CD4-positive, alpha-beta T cell (primary cell): ENCODE measurements at regions of chr3 and their contacts with region 1.

Region 1: DNA sequence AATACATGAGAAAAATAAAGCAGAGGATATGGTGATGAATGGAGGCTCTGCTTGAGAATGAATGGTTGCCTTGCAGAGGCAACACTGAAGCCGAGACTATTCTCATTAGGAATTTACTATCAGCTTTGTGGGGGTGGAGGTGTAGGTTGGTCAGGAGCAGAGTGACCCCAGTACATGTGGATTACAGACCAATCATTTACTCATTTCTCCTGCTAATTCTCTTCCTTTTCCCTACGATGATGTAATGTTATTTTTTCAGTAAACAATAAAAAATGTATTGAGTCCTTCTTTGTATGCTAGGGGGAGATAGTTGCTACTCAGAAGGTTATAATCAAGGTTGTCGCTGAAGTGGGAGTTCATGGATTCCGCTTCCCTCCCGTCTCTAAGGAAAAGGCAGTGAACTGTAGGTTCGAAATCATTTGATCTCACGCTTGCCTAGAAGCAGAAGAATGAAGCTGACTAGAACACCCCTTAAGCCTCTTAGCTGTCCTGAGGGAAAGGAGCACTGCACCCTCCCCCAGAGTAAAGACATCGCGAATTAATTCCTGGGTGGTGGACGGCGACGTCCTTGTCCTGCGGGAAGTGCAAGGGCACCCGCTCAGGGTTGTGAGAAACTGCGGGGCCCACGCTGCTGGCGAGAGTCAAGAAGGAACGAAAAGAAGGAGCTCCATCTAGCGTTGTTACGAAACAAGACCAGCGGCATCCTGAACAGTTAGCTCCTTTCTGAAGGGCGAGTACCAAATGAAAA is 213.2 kb upstream of the PFN2 start:
- DNase-seq: peak; percentile 6 to 71 (median 24)
- ATAC-seq: peak; percentile 75
- H3K4me3 ChIP-seq: peak overlapping the region; percentile 13
- H3K4me3 Mint-ChIP-seq: no peak overlapping the region
- H3K27ac ChIP-seq: no peak overlapping the region
- H3K27ac Mint-ChIP-seq: no peak overlapping the region
- H3K4me1 ChIP-seq: peaks cover 8% of the 10 kb centered on the region
- H3K4me1 Mint-ChIP-seq: no peaks in the 10 kb centered on the region
- H3K27me3 ChIP-seq: peaks cover 0 to 11% of the 10 kb centered on the region in 2 experiments
- H3K27me3 Mint-ChIP-seq: peaks cover 27% of the 10 kb centered on the region
- CTCF ChIP-seq: peak; percentile 47

Region 2: GRCh38 chr3:149044339-149045083 is 1139.3 kb before region 1 on chr3:
- CTCF ChIA-PET with region 1: no interaction called
- POLR2A ChIA-PET with region 1: no interaction called
- intact Hi-C with region 1: no loop called
- DNase-seq: no peak
- ATAC-seq: no peak
- H3K4me3 ChIP-seq: no peak overlapping the region
- H3K4me3 Mint-ChIP-seq: no peak overlapping the region
- H3K27ac ChIP-seq: no peak overlapping the region
- H3K27ac Mint-ChIP-seq: no peak overlapping the region
- H3K4me1 ChIP-seq: no peaks in the 10 kb centered on the region
- H3K4me1 Mint-ChIP-seq: peaks cover 18% of the 10 kb centered on the region
- H3K27me3 ChIP-seq: no peaks in the 10 kb centered on the region
- H3K27me3 Mint-ChIP-seq: no peaks in the 10 kb centered on the region
- CTCF ChIP-seq: no peak

Region 3: DNA sequence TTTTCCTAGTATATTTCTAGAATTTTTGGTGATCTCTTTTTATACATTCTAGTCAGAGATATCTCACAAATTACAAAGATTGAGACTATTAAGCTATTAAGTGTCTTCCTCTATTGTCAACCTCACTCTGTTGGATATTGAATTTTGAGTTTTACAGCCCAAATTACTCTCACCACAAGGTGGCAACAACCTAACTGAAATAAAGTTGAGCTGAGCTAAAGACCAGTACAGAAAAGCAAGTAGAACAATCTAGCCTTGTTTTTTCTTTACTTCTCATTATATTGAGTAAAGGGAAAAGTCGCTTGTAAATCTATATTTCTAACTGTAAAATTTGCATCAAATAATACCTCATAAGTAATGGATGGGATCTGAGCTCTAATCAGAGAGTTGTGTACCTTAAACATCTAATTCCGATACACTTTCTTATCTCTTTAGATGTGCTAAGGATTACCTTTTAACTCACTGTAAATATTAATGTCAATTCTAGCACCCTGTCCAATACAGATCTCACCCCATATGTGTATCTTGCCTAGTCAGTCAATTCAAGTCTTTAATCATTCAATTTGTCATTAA is 418.0 kb before region 1 on chr3:
- CTCF ChIA-PET with region 1: no interaction called
- POLR2A ChIA-PET with region 1: no interaction called
- intact Hi-C with region 1: loop called in 1 of 2 experiments (anchors 5 kb)
- DNase-seq: peak in 1 of 14 experiments; percentile 18
- ATAC-seq: no peak
- H3K4me3 ChIP-seq: no peak overlapping the region
- H3K4me3 Mint-ChIP-seq: no peak overlapping the region
- H3K27ac ChIP-seq: no peak overlapping the region
- H3K27ac Mint-ChIP-seq: no peak overlapping the region
- H3K4me1 ChIP-seq: no peaks in the 10 kb centered on the region
- H3K4me1 Mint-ChIP-seq: no peaks in the 10 kb centered on the region
- H3K27me3 ChIP-seq: peaks cover 6 to 34% of the 10 kb centered on the region in 2 experiments
- H3K27me3 Mint-ChIP-seq: peaks cover 19% of the 10 kb centered on the region
- CTCF ChIP-seq: peak; percentile 25

Region 4: DNA sequence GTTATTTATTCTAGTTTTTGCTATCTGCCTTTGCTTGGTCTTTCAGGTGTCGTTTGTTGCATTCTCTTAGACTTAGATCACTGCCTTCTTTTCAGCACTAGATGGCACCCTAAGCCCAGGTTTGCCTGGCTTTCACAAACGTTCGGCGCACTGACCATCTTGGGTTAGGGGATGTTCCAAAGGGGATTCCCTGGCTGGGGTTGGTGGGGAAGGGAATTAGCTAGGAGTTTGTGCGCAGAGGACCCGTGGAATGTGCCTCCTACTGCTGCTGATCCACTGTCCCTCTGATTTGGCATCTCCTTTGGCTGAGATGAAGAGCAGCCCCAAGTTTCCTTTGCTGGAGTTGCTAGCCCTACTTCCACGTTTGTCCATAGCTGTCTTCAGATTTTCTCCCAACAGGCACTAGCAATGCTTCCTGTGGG is 247.0 kb before region 1 on chr3:
- CTCF ChIA-PET with region 1: no interaction called
- POLR2A ChIA-PET with region 1: no interaction called
- intact Hi-C with region 1: loop called (anchors 1 to 10 kb)
- DNase-seq: peak in 12 of 14 experiments; percentile 1 to 67 (median 20)
- ATAC-seq: peak; percentile 57
- H3K4me3 ChIP-seq: no peak overlapping the region
- H3K4me3 Mint-ChIP-seq: no peak overlapping the region
- H3K27ac ChIP-seq: no peak overlapping the region
- H3K27ac Mint-ChIP-seq: no peak overlapping the region
- H3K4me1 ChIP-seq: peaks cover 5% of the 10 kb centered on the region
- H3K4me1 Mint-ChIP-seq: peaks cover 22% of the 10 kb centered on the region
- H3K27me3 ChIP-seq: no peaks in the 10 kb centered on the region
- H3K27me3 Mint-ChIP-seq: no peaks in the 10 kb centered on the region
- CTCF ChIP-seq: peak; percentile 72

Region 5: GRCh38 chr3:150005243-150006112 is 178.4 kb before region 1 on chr3:
- CTCF ChIA-PET with region 1: no interaction called
- POLR2A ChIA-PET with region 1: no interaction called
- intact Hi-C with region 1: no loop called
- DNase-seq: no peak
- ATAC-seq: no peak
- H3K4me3 ChIP-seq: no peak overlapping the region
- H3K4me3 Mint-ChIP-seq: no peak overlapping the region
- H3K27ac ChIP-seq: no peak overlapping the region
- H3K27ac Mint-ChIP-seq: no peak overlapping the region
- H3K4me1 ChIP-seq: no peaks in the 10 kb centered on the region
- H3K4me1 Mint-ChIP-seq: no peaks in the 10 kb centered on the region
- H3K27me3 ChIP-seq: no peaks in the 10 kb centered on the region
- H3K27me3 Mint-ChIP-seq: no peaks in the 10 kb centered on the region
- CTCF ChIP-seq: no peak

Region 6: DNA sequence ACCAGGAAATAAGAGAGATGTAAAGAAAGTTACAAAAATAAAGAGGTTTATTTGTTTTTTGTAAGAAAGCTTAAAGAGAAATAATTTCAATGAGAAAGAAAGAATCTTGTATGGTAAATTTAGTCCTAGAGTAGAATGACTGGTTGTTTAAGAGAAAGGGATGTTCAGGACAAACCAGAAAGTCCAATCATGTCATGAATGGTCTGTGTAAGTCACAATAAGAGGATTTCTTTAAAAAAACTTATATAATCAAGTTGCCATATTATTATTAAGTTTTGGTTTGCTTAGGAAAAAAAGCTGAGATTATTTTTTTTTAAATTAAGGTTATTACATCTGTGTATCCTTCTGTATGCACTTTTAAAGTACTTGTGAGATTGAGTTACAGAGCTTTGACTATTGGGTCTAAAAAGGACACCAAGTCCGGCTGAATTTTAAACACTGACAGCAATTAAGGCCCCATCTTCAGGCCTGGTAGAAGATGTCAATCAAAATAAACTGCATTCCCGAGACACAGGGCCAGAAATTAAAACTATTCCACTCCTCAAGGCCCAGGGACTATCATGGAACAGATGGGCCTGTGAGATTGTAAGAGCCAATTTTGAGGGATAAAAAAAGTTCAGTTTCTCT is 507.7 kb after region 1 on chr3:
- CTCF ChIA-PET with region 1: no interaction called
- POLR2A ChIA-PET with region 1: no interaction called
- intact Hi-C with region 1: no loop called
- DNase-seq: no peak
- ATAC-seq: no peak
- H3K4me3 ChIP-seq: no peak overlapping the region
- H3K4me3 Mint-ChIP-seq: no peak overlapping the region
- H3K27ac ChIP-seq: no peak overlapping the region
- H3K27ac Mint-ChIP-seq: no peak overlapping the region
- H3K4me1 ChIP-seq: no peaks in the 10 kb centered on the region
- H3K4me1 Mint-ChIP-seq: no peaks in the 10 kb centered on the region
- H3K27me3 ChIP-seq: no peaks in the 10 kb centered on the region
- H3K27me3 Mint-ChIP-seq: no peaks in the 10 kb centered on the region
- CTCF ChIP-seq: no peak